ENCODE measurements at regions of chr3 and their contacts with region 1.

Region 1: GRCh38 chr3:71846185-71846584 is 61.2 kb upstream of the PROK2 start:
- DNase-seq: no peak
- ATAC-seq: no peak
- H3K4me3 ChIP-seq: no peak overlapping the region
- H3K27ac ChIP-seq: no peak overlapping the region
- H3K4me1 ChIP-seq: no peaks in the 10 kb centered on the region
- H3K27me3 ChIP-seq: peaks cover 4% of the 10 kb centered on the region

Region 2: DNA sequence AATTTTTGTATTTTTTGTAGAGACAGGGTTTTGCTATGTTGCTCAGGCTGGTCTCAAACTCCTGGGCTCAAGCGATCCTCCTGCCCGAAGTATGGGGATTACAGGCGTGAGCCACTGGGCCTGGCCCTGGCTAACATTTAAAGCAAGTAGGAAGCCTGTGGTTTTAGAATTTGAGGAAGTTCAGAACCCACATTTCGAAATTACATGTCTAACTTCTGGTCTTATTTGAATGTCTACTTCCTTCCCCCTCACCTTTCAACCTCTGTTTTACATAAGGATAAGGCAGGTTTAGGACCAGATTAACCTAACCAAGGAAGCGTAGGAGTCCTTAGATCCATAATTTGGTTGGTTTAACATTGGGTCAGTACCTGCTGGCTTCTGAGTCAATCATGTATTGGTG is 59.2 kb after region 1 on chr3:
- intact Hi-C with region 1: loop called in 1 of 4 experiments (anchors 10 kb)
- DNase-seq: peak in 1 of 3 donors; percentile 58
- ATAC-seq: peak in 1 of 2 donors; percentile 31
- H3K4me3 ChIP-seq: no peak overlapping the region
- H3K27ac ChIP-seq: no peak overlapping the region
- H3K4me1 ChIP-seq: peaks cover 5% of the 10 kb centered on the region
- H3K27me3 ChIP-seq: no peaks in the 10 kb centered on the region

Measured in right cardiac atrium (tissue), 5 donors.